Pancreas (tissue), 10 donors: ENCODE measurements at regions of chr5 and their contacts with region 1.

Region 1: GRCh38 chr5:173615884-173616576 is 420 bp downstream of the BOD1 start:
- DNase-seq: peak; percentile 58 to 87 (median 70)
- ATAC-seq: peak; percentile 66 to 81 (median 76)
- H3K4me3 ChIP-seq: peak overlapping the region; percentile 79 to 99 (median 88)
- H3K27ac ChIP-seq: peak overlapping the region; percentile 72 to 97 (median 92)
- H3K4me1 ChIP-seq: peaks cover 21 to 38% (median 32%) of the 10 kb centered on the region in 3 donors
- H3K27me3 ChIP-seq: no peaks in the 10 kb centered on the region
- CTCF ChIP-seq: peak; percentile 29 to 57 (median 38)

Region 2: DNA sequence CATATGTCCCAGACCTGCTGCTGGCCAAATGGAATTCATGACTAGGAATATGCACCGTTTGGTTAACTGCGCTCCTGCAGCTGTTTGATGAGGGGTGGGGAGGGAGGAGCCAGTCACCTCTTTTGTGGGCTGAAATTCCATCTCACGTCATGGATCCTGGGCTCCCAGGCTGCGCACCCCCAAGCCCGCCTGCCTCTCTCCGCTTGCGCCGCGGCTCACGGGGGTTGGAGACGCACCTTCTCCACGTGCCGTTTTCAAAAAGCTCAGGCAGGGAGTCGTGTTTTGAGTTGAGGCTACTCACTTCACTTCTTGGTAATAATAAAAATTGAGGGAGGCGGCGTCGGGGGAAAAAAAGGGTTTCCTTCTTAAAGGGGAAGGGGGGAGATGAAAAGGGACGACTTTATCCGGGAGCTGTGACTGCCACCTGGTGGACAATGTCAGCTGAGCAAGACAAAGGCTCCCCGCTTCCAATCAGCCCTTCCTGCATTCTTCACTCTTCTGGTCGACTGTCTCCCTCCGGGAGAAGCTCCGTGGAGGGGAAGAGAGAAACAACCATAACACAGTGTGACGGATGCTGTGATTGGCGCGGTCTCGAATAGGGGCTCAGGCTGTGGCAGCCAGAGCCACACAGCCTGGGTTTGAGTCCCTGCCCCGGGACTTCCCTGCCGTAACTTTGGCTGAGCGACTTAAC is 357.0 kb after region 1 on chr5:
- intact Hi-C with region 1: loop called in 1 of 3 experiments (anchors 5 kb)
- DNase-seq: peak; percentile 83 to 89 (median 86)
- ATAC-seq: peak; percentile 92 to 97 (median 95)
- H3K4me3 ChIP-seq: peak overlapping the region; percentile 26 to 54 (median 44)
- H3K27ac ChIP-seq: peak overlapping the region in 2 of 4 donors; percentile 71 to 74
- H3K4me1 ChIP-seq: peaks cover 0 to 3% (median 0%) of the 10 kb centered on the region in 3 donors
- H3K27me3 ChIP-seq: no peaks in the 10 kb centered on the region
- CTCF ChIP-seq: peak; percentile 77 to 85 (median 80)

Region 3: GRCh38 chr5:173989432-173990082 is 373.5 kb after region 1 on chr5:
- intact Hi-C with region 1: loop called in 1 of 3 experiments (anchors 5 kb)
- DNase-seq: peak in 1 of 6 donors; percentile 20
- ATAC-seq: no peak
- H3K4me3 ChIP-seq: no peak overlapping the region
- H3K27ac ChIP-seq: no peak overlapping the region
- H3K4me1 ChIP-seq: no peaks in the 10 kb centered on the region
- H3K27me3 ChIP-seq: no peaks in the 10 kb centered on the region
- CTCF ChIP-seq: no peak

Region 4: GRCh38 chr5:174311531-174312269 is 695.7 kb after region 1 on chr5:
- intact Hi-C with region 1: loop called in 2 of 3 experiments (anchors 5 to 10 kb)
- DNase-seq: peak; percentile 47 to 94 (median 76)
- ATAC-seq: peak; percentile 88 to 96 (median 96)
- H3K4me3 ChIP-seq: peak overlapping the region; percentile 5 to 49 (median 26)
- H3K27ac ChIP-seq: no peak overlapping the region
- H3K4me1 ChIP-seq: no peaks in the 10 kb centered on the region
- H3K27me3 ChIP-seq: no peaks in the 10 kb centered on the region
- CTCF ChIP-seq: peak; percentile 85 to 94 (median 90)